ENCODE measurements at regions of chr1 and their contacts with region 1.

Region 1: GRCh38 chr1:152869808-152870419 is 8.2 kb upstream of the SMCP start:
- DNase-seq: peak; percentile 91
- H3K4me3 Mint-ChIP-seq: no peak overlapping the region
- H3K27ac Mint-ChIP-seq: no peak overlapping the region
- H3K4me1 Mint-ChIP-seq: peaks cover 20% of the 10 kb centered on the region
- H3K27me3 Mint-ChIP-seq: no peaks in the 10 kb centered on the region
- CTCF ChIP-seq: peak; percentile 95

Region 2: GRCh38 chr1:152451254-152451653 is 418.7 kb before region 1 on chr1:
- CTCF ChIA-PET with region 1: no interaction called
- POLR2A ChIA-PET with region 1: no interaction called
- intact Hi-C with region 1: no loop called
- DNase-seq: peak; percentile 38
- H3K4me3 Mint-ChIP-seq: no peak overlapping the region
- H3K27ac Mint-ChIP-seq: no peak overlapping the region
- H3K4me1 Mint-ChIP-seq: no peaks in the 10 kb centered on the region
- H3K27me3 Mint-ChIP-seq: peaks cover 18% of the 10 kb centered on the region
- CTCF ChIP-seq: no peak

Region 3: DNA sequence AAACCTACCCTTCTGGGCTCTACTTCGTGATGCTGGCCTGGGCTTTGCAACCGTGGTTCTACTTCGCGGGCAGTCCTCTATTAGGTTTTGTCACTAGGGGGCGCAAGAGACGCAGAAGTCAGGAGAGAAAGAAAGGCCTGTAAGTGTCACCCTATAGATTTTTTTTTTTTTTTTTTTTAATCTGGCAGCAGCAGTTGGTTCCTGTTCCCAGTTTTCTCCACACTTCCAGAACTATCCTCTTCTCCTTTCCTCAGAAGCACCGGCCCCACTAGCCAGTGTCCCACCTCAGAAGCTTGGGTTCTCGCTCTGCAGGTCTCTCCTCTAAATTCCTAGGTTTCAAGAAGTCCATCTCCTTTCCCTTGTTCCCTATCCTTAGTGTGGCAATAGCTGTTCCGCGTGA is 215.8 kb before region 1 on chr1:
- CTCF ChIA-PET with region 1: interaction called, 253 read pairs
- POLR2A ChIA-PET with region 1: interaction called, 4 read pairs
- intact Hi-C with region 1: loop called (anchors 1 kb)
- DNase-seq: peak; percentile 91
- H3K4me3 Mint-ChIP-seq: no peak overlapping the region
- H3K27ac Mint-ChIP-seq: no peak overlapping the region
- H3K4me1 Mint-ChIP-seq: no peaks in the 10 kb centered on the region
- H3K27me3 Mint-ChIP-seq: no peaks in the 10 kb centered on the region
- CTCF ChIP-seq: peak; percentile 87

Region 4: GRCh38 chr1:152768847-152769533 is 100.9 kb before region 1 on chr1:
- CTCF ChIA-PET with region 1: interaction called, 21 read pairs
- POLR2A ChIA-PET with region 1: no interaction called
- intact Hi-C with region 1: loop called (anchors 1 kb)
- DNase-seq: peak; percentile 63
- H3K4me3 Mint-ChIP-seq: no peak overlapping the region
- H3K27ac Mint-ChIP-seq: peak overlapping the region; percentile 5
- H3K4me1 Mint-ChIP-seq: peaks cover 29% of the 10 kb centered on the region
- H3K27me3 Mint-ChIP-seq: no peaks in the 10 kb centered on the region
- CTCF ChIP-seq: peak; percentile 13

Region 5: GRCh38 chr1:152899883-152900282 is 30.0 kb after region 1 on chr1:
- CTCF ChIA-PET with region 1: interaction called, 46 read pairs
- POLR2A ChIA-PET with region 1: no interaction called
- intact Hi-C with region 1: no loop called
- DNase-seq: no peak
- H3K4me3 Mint-ChIP-seq: no peak overlapping the region
- H3K27ac Mint-ChIP-seq: no peak overlapping the region
- H3K4me1 Mint-ChIP-seq: peaks cover 3% of the 10 kb centered on the region
- H3K27me3 Mint-ChIP-seq: no peaks in the 10 kb centered on the region
- CTCF ChIP-seq: no peak

Region 6: DNA sequence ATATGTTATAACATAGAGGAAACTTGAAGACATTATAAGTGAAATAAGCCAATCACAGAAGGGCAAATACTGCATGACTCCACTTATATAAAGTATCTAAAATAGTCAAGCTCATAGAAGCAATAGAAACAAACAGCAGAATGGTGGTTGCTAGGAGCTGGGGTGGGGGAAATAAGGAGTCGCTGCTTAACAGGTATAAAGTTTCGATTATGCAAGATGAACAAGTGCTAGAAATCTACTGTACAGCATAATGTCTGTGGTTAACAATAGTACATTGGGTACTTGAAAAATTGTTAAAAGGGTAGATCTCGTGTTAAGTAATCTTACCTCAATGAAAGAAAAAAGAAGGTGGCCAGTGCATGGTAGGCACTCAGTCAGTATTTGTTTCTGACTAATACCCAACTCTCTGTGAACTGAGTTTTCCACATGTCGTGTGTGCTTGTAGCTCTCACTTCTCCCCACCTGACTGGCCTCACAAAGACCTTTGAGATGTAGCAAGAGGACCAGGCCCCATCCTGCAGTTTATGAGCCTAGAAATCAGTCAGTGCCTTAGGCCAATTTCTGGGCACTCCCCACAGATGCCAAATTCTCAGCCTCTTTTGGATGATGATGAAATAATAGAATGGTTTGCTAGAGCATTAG is 62.4 kb after region 1 on chr1:
- CTCF ChIA-PET with region 1: interaction called, 186 read pairs
- POLR2A ChIA-PET with region 1: interaction called, 7 read pairs
- intact Hi-C with region 1: no loop called
- DNase-seq: peak; percentile 89
- H3K4me3 Mint-ChIP-seq: no peak overlapping the region
- H3K27ac Mint-ChIP-seq: peak overlapping the region; percentile 14
- H3K4me1 Mint-ChIP-seq: peaks cover 25% of the 10 kb centered on the region
- H3K27me3 Mint-ChIP-seq: no peaks in the 10 kb centered on the region
- CTCF ChIP-seq: no peak

Region 7: GRCh38 chr1:153192697-153193096 is 322.8 kb after region 1 on chr1:
- CTCF ChIA-PET with region 1: interaction called, 479 read pairs
- POLR2A ChIA-PET with region 1: interaction called, 8 read pairs
- intact Hi-C with region 1: loop called (anchors 1 kb)
- DNase-seq: peak; percentile 77
- H3K4me3 Mint-ChIP-seq: no peak overlapping the region
- H3K27ac Mint-ChIP-seq: no peak overlapping the region
- H3K4me1 Mint-ChIP-seq: peaks cover 8% of the 10 kb centered on the region
- H3K27me3 Mint-ChIP-seq: peaks cover 27% of the 10 kb centered on the region
- CTCF ChIP-seq: peak; percentile 98

Measured in MCF 10A (cell line).